ENCODE measurements at regions of chr4 and their contacts with region 1.

Region 1: DNA sequence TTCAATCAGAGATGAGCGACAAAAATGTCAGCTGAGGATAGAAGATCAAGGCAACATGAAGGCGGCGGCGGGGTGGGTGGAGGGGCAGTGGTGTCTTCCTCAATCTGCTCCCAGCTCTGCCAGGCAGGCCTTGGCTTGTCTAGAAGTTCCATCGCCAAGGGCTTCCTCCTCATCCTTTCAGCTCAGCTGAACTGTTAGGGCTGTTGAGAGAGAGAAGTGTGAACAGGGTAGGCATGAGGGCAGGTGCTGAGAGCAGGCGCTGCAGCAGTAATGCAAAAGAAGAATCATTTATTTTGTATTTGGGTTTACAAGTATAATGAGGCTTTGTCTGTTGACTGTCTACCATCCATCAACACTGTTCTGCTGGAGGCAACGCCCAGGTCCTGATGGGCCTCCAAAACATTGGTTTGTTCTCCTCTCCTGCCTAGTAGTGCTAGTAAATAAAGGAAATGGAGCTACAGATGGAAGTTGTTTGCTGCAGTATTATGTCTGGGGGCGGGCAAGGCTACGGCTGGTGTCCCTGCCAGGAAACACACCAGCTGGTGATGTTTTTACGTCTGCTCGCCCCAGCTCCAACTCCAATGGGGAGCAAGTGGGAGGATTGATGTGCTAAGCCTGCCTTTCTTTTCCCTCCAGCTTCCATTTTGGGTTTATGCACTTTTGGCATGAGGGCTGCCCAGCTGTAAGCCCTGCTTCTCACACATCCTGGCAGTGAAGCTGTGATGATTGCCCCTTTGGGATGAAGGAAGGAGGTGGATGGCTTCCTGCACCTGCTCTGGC is 139.4 kb upstream of the BOD1L1 start:
- DNase-seq: peak in 1 of 2 donors; percentile 13
- ATAC-seq: peak in 4 of 8 donors; percentile 34 to 72 (median 52)
- H3K4me3 ChIP-seq: no peak overlapping the region
- H3K27ac ChIP-seq: no peak overlapping the region
- H3K4me1 ChIP-seq: no peaks in the 10 kb centered on the region
- H3K27me3 ChIP-seq: no peaks in the 10 kb centered on the region
- CTCF ChIP-seq: no peak

Region 2: DNA sequence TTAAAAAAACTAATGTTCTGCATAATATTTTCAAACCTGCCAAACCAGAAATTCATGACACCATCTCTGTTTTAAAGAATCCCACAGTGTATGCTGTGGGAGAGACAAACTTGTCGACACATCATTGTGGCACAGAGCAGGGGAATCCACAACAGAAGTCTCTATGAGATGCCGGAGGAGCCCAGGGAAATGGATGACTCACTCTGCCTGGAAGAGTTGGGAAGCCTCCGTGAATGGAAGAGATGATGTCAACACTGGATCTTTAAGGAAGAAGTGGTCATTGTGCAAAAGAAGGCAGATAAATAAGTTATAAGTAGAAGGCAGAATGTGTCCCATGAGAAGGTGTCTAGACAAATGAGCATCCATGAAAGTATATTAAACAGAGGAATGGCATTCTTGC is 877.9 kb before region 1 on chr4:
- intact Hi-C with region 1: no loop called
- DNase-seq: peak in 1 of 2 donors; percentile 7
- ATAC-seq: peak in 2 of 8 donors; percentile 55 to 85
- H3K4me3 ChIP-seq: no peak overlapping the region
- H3K27ac ChIP-seq: no peak overlapping the region
- H3K4me1 ChIP-seq: peaks cover 0 to 5% (median 0%) of the 10 kb centered on the region in 9 donors
- H3K27me3 ChIP-seq: no peaks in the 10 kb centered on the region
- CTCF ChIP-seq: no peak

Region 3: DNA sequence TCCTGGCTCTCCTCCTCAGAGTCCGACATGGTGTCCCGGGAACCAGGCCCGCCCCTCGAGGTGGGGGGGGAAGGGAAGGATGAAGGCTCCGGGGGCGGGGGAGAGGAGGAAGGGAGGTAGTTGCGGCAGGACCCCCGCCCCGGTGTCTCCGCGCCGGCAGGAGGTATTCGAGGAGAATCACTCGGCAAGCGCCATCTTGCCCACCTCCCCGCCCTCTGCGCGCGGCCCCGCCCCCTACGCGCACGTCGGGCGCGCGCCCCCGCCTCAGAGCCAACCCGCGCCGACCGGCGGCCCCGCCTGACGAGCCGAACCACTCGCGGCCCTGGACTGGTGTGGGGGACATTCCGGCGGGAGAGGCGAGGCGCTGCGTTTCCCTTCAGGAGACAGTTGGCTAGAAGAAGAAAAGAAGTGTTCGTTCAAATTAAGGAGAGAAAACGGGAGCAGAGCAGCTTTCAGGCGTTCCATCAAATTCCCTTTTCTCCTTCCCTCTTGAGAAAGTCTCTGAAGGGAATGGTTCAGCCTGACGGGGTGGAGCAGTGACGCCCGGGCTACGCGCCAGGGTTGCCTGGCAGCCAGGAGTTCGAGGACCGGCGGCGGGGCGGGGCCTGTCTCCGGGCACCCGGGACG is 282.7 kb before region 1 on chr4 and contains the start of gene RAB28:
- intact Hi-C with region 1: no loop called
- DNase-seq: peak; percentile 95 to 96
- ATAC-seq: peak; percentile 99 to 100 (median 99)
- H3K4me3 ChIP-seq: peak within 1 kb of the TSS; percentile 71 to 85 (median 82)
- H3K27ac ChIP-seq: peak within 1 kb of the TSS; percentile 77 to 98 (median 92)
- H3K4me1 ChIP-seq: peaks cover 0 to 44% (median 27%) of the 10 kb centered on the region in 9 donors
- H3K27me3 ChIP-seq: peaks cover 0 to 27% (median 6%) of the 10 kb centered on the region in 7 donors
- CTCF ChIP-seq: no peak
- total RNA-seq, gene RAB28: 13.5 to 27.5 (median 21.6) TPM

Region 4: DNA sequence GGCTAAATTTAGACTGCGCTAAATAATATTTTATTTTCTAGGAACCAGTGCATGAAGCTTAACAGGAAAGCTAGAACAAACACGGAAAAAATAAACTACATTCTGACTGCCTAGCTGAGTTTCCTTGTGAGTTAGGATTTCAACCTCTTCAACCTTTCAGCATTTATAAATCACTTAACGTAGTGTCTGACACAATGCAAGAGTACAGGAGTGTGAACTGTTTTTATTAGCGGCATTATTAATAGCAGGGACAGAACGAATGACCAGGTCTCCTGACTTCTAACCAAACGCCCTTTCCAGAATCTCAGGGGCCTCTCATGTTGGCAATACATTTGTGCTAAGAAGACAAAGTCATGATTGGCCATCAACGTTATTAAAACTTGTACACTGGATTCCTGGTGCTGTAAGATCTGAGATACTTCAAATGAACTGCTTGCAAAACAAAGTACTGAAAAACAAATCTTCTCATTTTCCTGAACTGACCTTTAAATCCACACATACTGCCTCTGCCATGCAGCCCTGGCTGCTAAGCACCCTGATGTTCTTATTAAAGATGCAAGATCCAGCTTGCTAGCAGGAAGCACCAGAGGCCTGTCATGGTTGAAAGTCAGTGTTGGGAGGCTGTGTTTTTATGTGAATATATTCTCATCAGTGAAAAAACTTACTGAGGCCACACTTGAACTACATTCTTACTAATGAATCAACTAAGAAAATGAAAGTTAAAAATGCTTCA is 854.9 kb after region 1 on chr4:
- intact Hi-C with region 1: loop called in 1 of 10 experiments (anchors 5 kb)
- DNase-seq: no peak
- ATAC-seq: peak; percentile 73 to 98 (median 90)
- H3K4me3 ChIP-seq: no peak overlapping the region
- H3K27ac ChIP-seq: peak overlapping the region in 8 of 10 donors; percentile 38 to 72 (median 64)
- H3K4me1 ChIP-seq: peaks cover 0 to 18% (median 5%) of the 10 kb centered on the region in 9 donors
- H3K27me3 ChIP-seq: no peaks in the 10 kb centered on the region
- CTCF ChIP-seq: no peak

Measured in heart right ventricle (tissue), 16 donors.